ENCODE measurements at regions of chr15 and their contacts with region 1.

Region 1: DNA sequence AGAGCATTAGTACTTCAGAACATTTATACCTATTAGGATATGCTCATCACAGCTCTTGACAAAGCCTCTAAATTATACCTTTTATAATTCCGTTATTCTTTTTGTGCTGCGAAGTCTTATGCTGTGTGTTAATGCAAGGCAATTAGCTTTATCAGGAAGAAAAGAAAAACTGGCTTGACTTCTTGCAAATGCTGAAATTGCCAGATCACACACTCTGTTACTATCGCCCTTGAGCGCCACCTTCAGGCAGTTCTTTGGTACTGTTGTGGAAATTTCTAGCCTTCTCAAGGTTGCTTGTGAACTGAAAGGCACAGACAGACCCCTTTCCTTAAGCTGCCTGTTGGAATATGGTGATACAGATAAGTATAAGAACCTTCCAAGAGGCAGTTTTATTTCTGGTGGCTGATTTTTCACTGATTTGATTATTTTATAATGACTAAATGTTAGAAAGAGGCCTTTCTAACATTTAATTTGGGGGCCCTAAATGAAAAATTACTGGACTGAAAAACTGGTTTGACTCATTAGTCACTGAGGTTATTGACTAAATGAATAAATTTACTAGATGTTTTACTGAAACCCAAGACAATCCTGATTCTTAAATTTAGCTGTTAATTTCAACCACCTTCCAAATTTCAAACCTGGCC is 126.2 kb upstream of the RASGRP1 start:
- DNase-seq: peak; percentile 87
- H3K4me3 Mint-ChIP-seq: peak overlapping the region; percentile 31
- H3K27ac Mint-ChIP-seq: peak overlapping the region; percentile 71
- H3K4me1 Mint-ChIP-seq: peaks cover 87% of the 10 kb centered on the region
- H3K27me3 Mint-ChIP-seq: no peaks in the 10 kb centered on the region

Region 2: GRCh38 chr15:38440353-38441129 is 250.3 kb before region 1 on chr15:
- CTCF ChIA-PET with region 1: interaction called, 266 read pairs
- POLR2A ChIA-PET with region 1: no interaction called
- intact Hi-C with region 1: loop called (anchors 1 kb)
- DNase-seq: peak; percentile 60
- H3K4me3 Mint-ChIP-seq: no peak overlapping the region
- H3K27ac Mint-ChIP-seq: peak overlapping the region; percentile 6
- H3K4me1 Mint-ChIP-seq: peaks cover 5% of the 10 kb centered on the region
- H3K27me3 Mint-ChIP-seq: peaks cover 11% of the 10 kb centered on the region

Region 3: GRCh38 chr15:38474155-38474757 is 216.6 kb before region 1 on chr15:
- CTCF ChIA-PET with region 1: interaction called, 54 read pairs
- POLR2A ChIA-PET with region 1: no interaction called
- intact Hi-C with region 1: loop called (anchors 1 kb)
- DNase-seq: no peak
- H3K4me3 Mint-ChIP-seq: no peak overlapping the region
- H3K27ac Mint-ChIP-seq: no peak overlapping the region
- H3K4me1 Mint-ChIP-seq: peaks cover 9% of the 10 kb centered on the region
- H3K27me3 Mint-ChIP-seq: no peaks in the 10 kb centered on the region

Region 4: DNA sequence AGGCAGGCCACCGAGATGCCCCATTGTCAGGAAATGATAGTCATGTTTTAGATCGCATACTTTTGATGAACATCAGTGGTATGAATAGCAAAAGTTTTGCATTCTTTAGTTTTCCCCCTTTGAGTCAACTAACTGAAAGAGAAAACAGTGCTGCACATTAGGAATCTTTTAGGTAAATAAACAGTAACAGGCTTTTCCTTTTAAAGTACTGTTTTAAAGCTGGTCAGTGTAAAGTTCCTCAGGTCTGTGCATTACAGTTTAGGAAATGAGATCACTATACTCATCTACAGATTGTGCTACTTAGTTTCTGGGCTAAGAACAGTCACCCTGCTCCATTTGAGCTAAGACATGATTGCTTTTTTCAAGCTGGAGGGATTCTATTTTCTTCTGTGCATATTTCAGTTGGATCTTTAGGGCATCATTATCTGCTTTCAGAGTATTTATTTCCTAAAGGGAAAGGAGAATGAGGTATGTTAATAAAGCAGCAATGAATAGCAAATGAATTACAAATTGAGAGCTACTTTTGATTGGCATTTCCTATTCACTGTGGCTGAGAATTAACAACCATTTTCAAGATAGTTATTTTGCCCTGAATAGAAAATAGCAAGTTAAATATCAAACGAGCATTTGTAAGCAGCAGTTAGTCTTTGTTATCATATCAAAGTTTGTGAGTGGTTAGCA is 200.4 kb before region 1 on chr15:
- CTCF ChIA-PET with region 1: interaction called, 17 read pairs
- POLR2A ChIA-PET with region 1: interaction called, 5 read pairs
- intact Hi-C with region 1: loop called (anchors 1 kb)
- DNase-seq: no peak
- H3K4me3 Mint-ChIP-seq: no peak overlapping the region
- H3K27ac Mint-ChIP-seq: peak overlapping the region; percentile 61
- H3K4me1 Mint-ChIP-seq: peaks cover 66% of the 10 kb centered on the region
- H3K27me3 Mint-ChIP-seq: no peaks in the 10 kb centered on the region

Region 5: GRCh38 chr15:38521316-38521715 is 169.5 kb before region 1 on chr15:
- CTCF ChIA-PET with region 1: interaction called, 20 read pairs
- POLR2A ChIA-PET with region 1: no interaction called
- intact Hi-C with region 1: no loop called
- DNase-seq: no peak
- H3K4me3 Mint-ChIP-seq: no peak overlapping the region
- H3K27ac Mint-ChIP-seq: peak overlapping the region; percentile 15
- H3K4me1 Mint-ChIP-seq: peaks cover 72% of the 10 kb centered on the region
- H3K27me3 Mint-ChIP-seq: no peaks in the 10 kb centered on the region

Region 6: GRCh38 chr15:38554354-38554753 is 136.5 kb before region 1 on chr15:
- CTCF ChIA-PET with region 1: interaction called, 551 read pairs
- POLR2A ChIA-PET with region 1: interaction called, 307 read pairs
- intact Hi-C with region 1: no loop called
- DNase-seq: peak; percentile 72
- H3K4me3 Mint-ChIP-seq: peak overlapping the region; percentile 15
- H3K27ac Mint-ChIP-seq: peak overlapping the region; percentile 99
- H3K4me1 Mint-ChIP-seq: peaks cover 89% of the 10 kb centered on the region
- H3K27me3 Mint-ChIP-seq: no peaks in the 10 kb centered on the region

Region 7: DNA sequence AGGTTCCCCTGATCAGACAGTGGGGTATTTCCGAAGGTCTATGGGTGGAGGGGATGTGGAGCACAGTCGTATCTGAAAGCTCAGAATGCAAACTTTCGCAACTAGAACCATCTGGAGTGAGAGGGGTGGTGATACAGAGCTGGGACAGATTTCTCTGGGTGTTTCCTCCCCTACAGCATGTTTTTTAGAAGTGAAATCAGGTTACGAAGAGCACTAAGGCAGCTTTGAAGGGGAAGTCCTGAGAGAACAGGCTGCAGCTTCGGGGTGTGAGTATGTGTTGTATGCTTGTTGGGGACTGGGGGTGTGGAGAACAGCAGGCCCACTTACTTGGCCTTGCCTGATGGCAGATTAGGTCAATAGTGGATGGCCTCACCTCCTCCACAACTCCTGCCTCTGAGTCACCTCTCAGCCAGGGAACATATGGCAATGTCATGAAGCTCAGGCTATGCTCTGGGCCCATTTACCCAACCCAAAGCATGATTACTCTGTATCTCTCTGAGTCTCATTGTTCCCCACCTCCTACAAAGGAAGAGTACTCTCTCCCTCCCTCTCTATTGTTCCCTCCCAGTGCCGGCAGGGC is 19.0 kb before region 1 on chr15:
- CTCF ChIA-PET with region 1: interaction called, 150 read pairs
- POLR2A ChIA-PET with region 1: interaction called, 37 read pairs
- intact Hi-C with region 1: loop called (anchors 1 kb)
- DNase-seq: peak; percentile 71
- H3K4me3 Mint-ChIP-seq: peak overlapping the region; percentile 66
- H3K27ac Mint-ChIP-seq: peak overlapping the region; percentile 97
- H3K4me1 Mint-ChIP-seq: peaks cover 78% of the 10 kb centered on the region
- H3K27me3 Mint-ChIP-seq: no peaks in the 10 kb centered on the region

Region 8: GRCh38 chr15:38817427-38818156 is 126.8 kb after region 1 on chr15:
- CTCF ChIA-PET with region 1: no interaction called
- POLR2A ChIA-PET with region 1: no interaction called
- intact Hi-C with region 1: no loop called
- DNase-seq: peak; percentile 89
- H3K4me3 Mint-ChIP-seq: no peak overlapping the region
- H3K27ac Mint-ChIP-seq: no peak overlapping the region
- H3K4me1 Mint-ChIP-seq: peaks cover 5% of the 10 kb centered on the region
- H3K27me3 Mint-ChIP-seq: peaks cover 3% of the 10 kb centered on the region